Left cardiac atrium (tissue), 4 donors: ENCODE measurements at regions of chr6 and their contacts with region 1.

Region 1: DNA sequence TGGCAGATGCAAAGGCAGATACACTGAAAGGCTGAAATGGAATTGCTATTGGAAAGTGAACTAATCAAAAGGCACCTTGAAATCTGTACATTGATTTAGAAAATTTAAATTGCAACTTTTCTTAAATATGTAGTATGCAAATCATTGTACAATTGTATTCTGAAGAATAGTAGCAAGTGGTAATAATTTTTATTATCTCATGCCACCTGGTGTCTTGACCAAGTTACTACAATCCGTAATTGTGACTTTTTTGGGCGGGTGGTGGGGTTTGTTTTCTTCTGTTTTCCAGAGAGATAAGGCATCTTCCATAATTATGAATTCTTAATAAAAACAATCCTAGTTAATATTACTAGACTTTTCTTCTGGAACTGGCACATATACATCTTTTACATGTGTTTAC is 12.5 kb upstream of the BCKDHB start:
- DNase-seq: no peak
- ATAC-seq: no peak

Region 2: GRCh38 chr6:79777713-79778579 is 316.1 kb before region 1 on chr6:
- intact Hi-C with region 1: loop called in 1 of 2 experiments (anchors 5 kb)
- DNase-seq: peak; percentile 86
- ATAC-seq: peak; percentile 94 to 96

Region 3: DNA sequence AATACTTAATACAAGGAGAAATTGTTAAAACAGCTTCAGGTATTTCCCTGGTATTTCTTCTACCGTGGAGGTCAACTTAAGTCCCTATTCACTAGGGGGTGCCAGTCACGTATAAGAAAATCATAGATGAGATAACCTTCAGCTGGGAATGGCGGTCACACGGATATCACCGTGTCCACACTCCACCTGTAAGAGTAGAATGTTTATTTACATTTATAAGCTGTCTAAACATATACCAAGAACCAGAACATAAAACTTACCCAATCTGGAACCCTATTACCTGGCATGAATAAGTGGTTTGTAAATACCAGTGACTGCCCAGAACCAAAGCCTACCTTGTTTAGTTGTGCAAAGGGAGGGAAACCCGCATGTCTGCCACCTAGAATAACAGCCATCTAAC is 144.8 kb before region 1 on chr6:
- intact Hi-C with region 1: loop called in 1 of 2 experiments (anchors 10 kb)
- DNase-seq: peak; percentile 32
- ATAC-seq: no peak

Region 4: DNA sequence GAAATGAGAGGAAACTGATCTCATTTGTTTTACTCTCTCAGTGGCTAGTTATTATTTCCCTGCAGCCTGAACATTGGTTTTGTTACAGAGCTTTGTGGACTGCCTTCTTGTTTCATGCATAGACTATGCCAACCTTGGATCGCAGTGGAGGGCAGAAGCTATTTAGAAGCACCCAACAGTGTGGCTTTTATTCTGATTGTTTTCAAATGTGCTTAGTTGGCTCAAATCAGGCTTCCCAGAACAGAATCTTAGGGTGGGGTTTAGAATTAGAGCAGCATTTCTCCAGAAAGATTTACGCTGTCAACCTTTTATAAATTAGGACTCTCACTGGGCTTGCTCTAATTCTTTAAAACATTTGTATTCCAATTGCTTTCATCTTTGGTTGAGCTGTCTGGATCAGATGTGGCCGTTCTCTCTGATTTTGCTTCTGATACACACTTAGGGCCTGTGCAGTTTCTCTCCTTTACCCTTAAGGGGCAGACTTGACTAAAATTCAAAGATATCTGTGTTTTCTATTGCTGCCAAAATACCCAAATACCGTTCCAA is 222.7 kb after region 1 on chr6:
- intact Hi-C with region 1: no loop called
- DNase-seq: no peak
- ATAC-seq: no peak